ENCODE measurements at regions of chr1 and their contacts with region 1.

Region 1: DNA sequence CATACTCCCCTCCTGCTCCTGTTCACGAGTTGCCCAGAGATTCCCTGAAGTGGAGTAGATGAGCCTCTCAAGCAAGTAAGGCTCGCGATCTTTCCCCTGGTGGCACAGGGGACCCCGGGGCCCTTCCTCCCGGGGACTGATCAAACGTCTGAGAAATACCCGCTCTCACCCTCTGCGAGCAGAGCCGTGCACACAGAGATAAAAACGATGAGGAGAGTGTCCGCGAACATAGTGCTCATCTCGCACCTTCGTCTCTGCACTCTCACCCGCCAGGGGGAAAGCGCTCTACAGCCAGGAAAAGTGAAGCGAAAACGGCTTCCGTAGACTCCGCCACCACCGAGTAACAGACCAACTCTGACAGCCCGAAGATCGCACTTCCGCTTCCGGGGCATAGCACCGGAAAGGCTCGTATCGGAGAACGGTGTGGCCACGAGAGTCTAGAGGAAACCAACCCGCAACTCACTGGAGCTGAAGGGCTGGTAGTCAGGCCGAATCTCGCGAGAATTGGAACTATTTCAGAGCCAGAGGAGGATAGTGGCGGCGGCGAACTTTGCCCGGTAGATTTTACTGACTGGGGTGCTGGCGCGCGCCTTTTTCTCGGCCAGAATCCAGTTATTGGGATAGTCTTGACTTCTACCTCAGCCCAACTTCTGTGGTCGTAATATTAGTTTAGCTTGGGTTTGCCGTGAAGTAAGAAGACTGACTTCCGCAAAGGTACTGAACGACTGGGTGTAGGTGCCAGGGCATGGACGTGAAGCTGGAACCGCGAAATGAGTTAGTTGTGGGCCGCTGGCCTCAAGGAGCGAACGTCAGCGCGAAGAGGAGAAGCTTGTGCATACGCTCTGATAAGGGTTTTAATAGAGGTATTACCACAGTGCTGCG is at the start of gene TMCO1:
- DNase-seq: peak; percentile 97
- ATAC-seq: peak; percentile 96
- H3K4me3 ChIP-seq: peak within 1 kb of the TSS; percentile 79 to 95
- H3K27ac ChIP-seq: peak within 1 kb of the TSS; percentile 87
- H3K4me1 ChIP-seq: peaks cover 9 to 33% of the 10 kb centered on the region in 2 experiments; a peak in 3 of 4 replicates
- H3K27me3 ChIP-seq: no peaks in the 10 kb centered on the region
- CTCF ChIP-seq: peak in 1 of 3 experiments; percentile 20; a peak in 1 of 6 replicates
- POLR2A ChIP-seq: peak; percentile 88
- RAD21 ChIP-seq: no peak
- total RNA-seq, gene TMCO1: 61.2 TPM

Region 2: DNA sequence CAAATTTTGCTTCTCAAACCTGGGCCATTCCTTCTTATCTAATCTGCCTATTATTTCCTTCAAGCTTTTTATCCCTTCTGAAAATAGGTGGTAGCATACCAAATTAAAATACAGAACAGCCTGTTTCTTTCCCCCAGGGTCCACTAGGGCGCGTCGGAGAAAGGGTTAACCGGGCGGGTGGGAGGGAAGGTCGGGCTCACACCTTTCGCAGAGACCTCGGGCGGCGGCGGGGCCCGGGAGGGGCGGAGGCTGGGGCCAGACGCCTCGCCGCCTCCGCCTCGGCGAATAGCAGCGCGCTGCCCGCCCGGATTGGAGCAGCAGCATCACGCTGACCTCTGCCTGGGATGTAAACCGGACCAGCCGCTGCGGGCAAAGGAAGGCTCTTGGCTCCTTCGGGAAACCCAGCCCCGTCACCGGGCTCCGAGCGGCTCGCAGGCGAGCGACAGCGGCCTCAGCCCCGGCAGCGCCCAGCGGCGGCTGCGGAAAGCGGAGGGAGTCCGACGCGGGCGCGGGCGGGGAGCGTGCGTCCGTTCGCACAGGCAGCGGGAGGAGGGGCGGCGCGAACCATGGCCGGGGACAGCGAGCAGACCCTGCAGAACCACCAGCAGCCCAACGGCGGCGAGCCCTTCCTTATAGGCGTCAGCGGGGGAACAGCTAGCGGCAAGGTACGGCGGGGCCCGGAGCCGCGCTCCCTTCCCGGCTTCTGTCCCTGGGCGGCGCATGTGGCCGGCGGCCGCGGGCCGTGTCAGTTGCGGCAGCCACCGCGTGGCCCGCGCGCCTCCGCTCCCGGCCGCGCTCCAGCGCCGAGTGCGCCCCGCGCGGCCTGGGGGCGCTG is 58.7 kb after region 1 on chr1 and contains the start of gene UCK2:
- CTCF ChIA-PET with region 1: no interaction called
- POLR2A ChIA-PET with region 1: interaction called, 9 read pairs
- RAD21 ChIA-PET with region 1: no interaction called
- intact Hi-C with region 1: loop called (anchors 2 kb)
- DNase-seq: peak; percentile 58
- ATAC-seq: peak; percentile 90
- H3K4me3 ChIP-seq: peak within 1 kb of the TSS; percentile 69 to 70
- H3K27ac ChIP-seq: peak within 1 kb of the TSS; percentile 90
- H3K4me1 ChIP-seq: peaks cover 13 to 18% of the 10 kb centered on the region in 2 experiments; a peak in 3 of 4 replicates
- H3K27me3 ChIP-seq: no peaks in the 10 kb centered on the region
- CTCF ChIP-seq: no peak
- POLR2A ChIP-seq: peak; percentile 84
- RAD21 ChIP-seq: no peak
- total RNA-seq, gene UCK2: 88.4 TPM